SK-N-SH (cell line): ENCODE measurements at regions of chr18 and their contacts with region 1.

Region 1: DNA sequence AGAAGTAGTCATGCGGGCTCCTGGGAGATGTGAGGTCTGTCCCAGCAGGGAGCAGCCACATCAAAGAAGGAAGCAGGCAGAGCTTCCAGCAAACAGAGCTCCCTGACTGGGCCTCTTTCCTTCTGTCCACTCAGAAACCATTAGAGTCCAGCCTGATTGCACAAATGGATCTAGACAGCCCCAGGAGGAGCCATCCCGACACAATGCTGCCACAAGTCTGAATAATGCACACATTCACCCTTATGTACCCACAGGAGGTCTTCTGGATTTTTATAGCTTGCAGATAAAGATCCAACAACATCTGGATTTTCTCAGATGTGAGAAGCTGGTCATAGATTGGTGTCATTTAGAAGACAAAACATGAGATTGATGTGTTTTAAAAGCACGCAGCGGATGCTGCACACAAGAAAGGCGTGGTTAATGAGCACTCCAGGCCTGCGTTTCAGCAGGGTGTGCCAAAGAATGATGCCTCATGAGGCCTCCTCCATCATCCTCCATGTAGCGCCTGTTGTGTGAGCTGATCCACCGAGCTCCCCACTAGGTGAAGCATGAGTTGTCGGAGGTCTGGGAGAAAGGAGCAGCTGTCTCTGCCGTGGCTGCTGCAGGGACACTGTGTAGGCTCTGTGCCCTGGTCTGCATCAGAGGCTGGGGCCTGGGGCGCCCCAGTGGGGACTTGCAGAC is 60.6 kb downstream of the MTCL1 start:
- DNase-seq: peak; percentile 71
- H3K4me3 ChIP-seq: no peak overlapping the region
- H3K27ac ChIP-seq: peak overlapping the region in 1 of 2 experiments; percentile 99; a peak in 2 of 4 replicates
- H3K4me1 ChIP-seq: peaks cover 0 to 41% of the 10 kb centered on the region in 2 experiments; a peak in 2 of 4 replicates
- H3K27me3 ChIP-seq: no peaks in the 10 kb centered on the region
- CTCF ChIP-seq: no peak
- EP300 ChIP-seq: peak in 1 of 2 experiments; percentile 85; a peak in 1 of 4 replicates
- RAD21 ChIP-seq: peak; percentile 30

Region 2: GRCh38 chr18:8704361-8705279 is 61.3 kb before region 1 on chr18:
- CTCF ChIA-PET with region 1: interaction called, 20 read pairs
- POLR2A ChIA-PET with region 1: interaction called, 18 read pairs
- DNase-seq: peak; percentile 99
- H3K4me3 ChIP-seq: peak overlapping the region; percentile 66 to 83
- H3K27ac ChIP-seq: peak overlapping the region; percentile 86 to 87
- H3K4me1 ChIP-seq: peaks cover 20 to 25% of the 10 kb centered on the region in 2 experiments
- H3K27me3 ChIP-seq: no peaks in the 10 kb centered on the region
- CTCF ChIP-seq: no peak
- EP300 ChIP-seq: no peak
- RAD21 ChIP-seq: no peak

Region 3: DNA sequence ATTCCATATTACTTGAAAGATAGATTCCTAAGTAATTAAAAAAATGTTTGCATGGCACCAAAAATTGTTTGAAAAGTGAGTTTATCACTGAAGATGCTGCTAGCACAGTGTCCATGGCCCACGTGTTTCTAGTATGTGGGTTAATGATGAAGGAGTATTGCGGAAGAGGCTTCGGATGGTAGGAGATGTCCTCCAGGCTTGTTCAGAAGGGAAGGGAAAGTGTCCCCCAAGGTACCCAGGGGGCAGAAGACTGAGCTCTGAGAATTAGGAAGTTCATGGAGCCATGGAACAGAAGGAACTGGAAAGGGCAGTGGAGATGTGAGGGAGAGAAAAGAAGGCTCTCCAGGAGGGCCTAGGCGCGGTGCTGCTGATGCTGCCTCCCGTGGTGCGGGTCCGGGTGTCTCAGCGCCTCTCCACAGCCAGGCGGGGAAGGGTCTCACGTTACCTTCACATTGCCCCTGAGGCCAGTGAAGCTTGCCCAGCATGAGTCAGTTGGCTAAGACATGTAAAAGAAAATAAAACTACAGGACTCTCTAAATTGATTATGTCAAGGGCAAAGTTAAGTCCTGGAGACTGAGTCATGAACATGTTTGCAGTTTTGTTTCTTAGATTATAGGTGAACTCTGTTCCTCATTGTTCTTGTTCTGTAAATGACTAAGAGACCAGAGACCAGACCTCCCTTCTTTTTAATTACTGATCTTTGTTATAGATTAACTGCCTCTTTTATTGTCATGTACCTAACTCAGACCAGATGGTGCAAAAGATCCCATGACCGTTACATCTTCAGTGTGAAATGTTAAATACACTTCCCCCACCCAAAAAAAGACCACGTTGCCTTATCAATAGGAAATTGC is 28.4 kb after region 1 on chr18:
- CTCF ChIA-PET with region 1: interaction called, 8 read pairs
- POLR2A ChIA-PET with region 1: interaction called, 26 read pairs
- DNase-seq: peak; percentile 64
- H3K4me3 ChIP-seq: no peak overlapping the region; a peak in 1 of 4 replicates
- H3K27ac ChIP-seq: peak overlapping the region; percentile 91 to 94
- H3K4me1 ChIP-seq: peaks cover 53 to 68% of the 10 kb centered on the region in 2 experiments
- H3K27me3 ChIP-seq: no peaks in the 10 kb centered on the region
- CTCF ChIP-seq: no peak
- EP300 ChIP-seq: peak; percentile 78 to 88; a peak in 3 of 4 replicates
- RAD21 ChIP-seq: no peak

Region 4: DNA sequence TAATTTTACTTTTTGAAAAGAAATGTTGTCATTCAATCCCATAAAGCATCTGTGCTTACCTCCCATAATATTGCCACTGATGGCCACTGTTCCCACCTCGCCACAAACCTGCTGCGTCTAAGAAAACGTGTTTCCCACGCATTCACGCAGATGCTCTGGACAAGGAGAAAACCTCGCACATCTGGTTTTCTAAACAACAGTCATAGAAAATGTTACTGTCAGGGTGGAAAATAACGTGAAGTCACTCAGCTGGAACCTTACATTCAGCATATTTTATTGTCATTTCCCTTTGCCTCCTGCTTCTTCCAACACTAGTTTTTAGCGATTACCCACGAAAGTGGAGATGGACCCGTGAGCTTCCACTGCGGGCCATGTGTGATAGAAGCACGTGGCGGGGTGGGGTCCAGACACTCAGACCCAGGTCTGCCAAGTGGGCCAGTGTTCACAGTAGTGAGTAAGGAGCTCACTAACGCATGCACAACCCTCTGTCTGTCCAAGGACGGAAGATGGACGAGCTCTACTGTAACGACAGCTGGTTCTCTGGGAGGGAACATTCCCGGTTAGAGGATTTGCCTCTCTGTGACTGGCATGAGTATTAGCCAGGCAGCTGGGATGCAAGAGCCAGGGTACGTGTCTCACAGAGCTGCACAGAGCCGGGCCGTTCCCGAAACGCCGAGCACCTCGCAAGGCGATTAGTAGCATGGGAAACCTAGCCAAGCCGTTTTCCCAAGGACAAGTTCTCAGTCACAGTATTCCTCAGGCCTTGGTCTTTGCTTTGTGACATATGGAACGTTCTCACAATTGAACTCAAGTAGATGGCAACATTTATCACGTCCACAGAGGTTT is 33.9 kb after region 1 on chr18:
- CTCF ChIA-PET with region 1: interaction called, 8 read pairs
- POLR2A ChIA-PET with region 1: interaction called, 26 read pairs
- DNase-seq: no peak
- H3K4me3 ChIP-seq: no peak overlapping the region
- H3K27ac ChIP-seq: peak overlapping the region; percentile 74 to 88
- H3K4me1 ChIP-seq: peaks cover 43 to 56% of the 10 kb centered on the region in 2 experiments
- H3K27me3 ChIP-seq: no peaks in the 10 kb centered on the region
- CTCF ChIP-seq: no peak
- EP300 ChIP-seq: no peak
- RAD21 ChIP-seq: no peak

Region 5: GRCh38 chr18:8816816-8817215 is 50.9 kb after region 1 on chr18:
- CTCF ChIA-PET with region 1: no interaction called
- POLR2A ChIA-PET with region 1: no interaction called
- DNase-seq: no peak
- H3K4me3 ChIP-seq: no peak overlapping the region
- H3K27ac ChIP-seq: no peak overlapping the region
- H3K4me1 ChIP-seq: peaks cover 0 to 14% of the 10 kb centered on the region in 2 experiments; a peak in 3 of 4 replicates
- H3K27me3 ChIP-seq: no peaks in the 10 kb centered on the region
- CTCF ChIP-seq: no peak
- EP300 ChIP-seq: no peak
- RAD21 ChIP-seq: no peak

Region 6: DNA sequence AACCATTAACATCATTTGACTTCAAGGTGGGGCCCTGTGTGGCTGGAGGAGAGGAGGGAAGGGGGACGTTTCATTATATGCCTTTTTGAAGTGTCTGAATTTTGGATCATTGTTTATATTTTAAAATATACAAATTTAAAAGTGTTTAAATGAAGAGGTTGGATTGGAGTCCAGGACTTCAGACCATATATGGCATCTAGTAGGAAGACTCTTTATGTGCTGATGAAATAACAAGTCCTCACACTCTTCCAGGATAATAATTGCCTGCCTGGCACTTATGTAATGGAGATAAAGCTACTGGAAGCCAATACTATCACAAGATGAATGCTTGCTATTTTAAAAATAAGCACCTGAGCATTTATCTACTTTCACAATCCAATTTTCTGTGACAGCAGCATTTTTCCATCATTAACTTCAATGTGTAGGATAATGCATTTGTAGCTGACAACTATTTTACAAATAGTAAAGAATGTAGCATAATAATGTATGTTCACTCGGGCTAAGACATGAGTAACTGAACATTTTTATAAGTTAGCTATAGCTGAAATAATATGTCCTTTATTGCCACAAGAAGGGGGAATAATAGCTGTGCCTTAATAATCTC is 127.8 kb after region 1 on chr18:
- CTCF ChIA-PET with region 1: no interaction called
- POLR2A ChIA-PET with region 1: no interaction called
- DNase-seq: no peak
- H3K4me3 ChIP-seq: no peak overlapping the region
- H3K27ac ChIP-seq: no peak overlapping the region
- H3K4me1 ChIP-seq: peaks cover 0 to 10% of the 10 kb centered on the region in 2 experiments; a peak in 1 of 4 replicates
- H3K27me3 ChIP-seq: no peaks in the 10 kb centered on the region
- CTCF ChIP-seq: no peak
- EP300 ChIP-seq: no peak
- RAD21 ChIP-seq: no peak